ENCODE measurements at regions of chr11 and their contacts with region 1.

Region 1: DNA sequence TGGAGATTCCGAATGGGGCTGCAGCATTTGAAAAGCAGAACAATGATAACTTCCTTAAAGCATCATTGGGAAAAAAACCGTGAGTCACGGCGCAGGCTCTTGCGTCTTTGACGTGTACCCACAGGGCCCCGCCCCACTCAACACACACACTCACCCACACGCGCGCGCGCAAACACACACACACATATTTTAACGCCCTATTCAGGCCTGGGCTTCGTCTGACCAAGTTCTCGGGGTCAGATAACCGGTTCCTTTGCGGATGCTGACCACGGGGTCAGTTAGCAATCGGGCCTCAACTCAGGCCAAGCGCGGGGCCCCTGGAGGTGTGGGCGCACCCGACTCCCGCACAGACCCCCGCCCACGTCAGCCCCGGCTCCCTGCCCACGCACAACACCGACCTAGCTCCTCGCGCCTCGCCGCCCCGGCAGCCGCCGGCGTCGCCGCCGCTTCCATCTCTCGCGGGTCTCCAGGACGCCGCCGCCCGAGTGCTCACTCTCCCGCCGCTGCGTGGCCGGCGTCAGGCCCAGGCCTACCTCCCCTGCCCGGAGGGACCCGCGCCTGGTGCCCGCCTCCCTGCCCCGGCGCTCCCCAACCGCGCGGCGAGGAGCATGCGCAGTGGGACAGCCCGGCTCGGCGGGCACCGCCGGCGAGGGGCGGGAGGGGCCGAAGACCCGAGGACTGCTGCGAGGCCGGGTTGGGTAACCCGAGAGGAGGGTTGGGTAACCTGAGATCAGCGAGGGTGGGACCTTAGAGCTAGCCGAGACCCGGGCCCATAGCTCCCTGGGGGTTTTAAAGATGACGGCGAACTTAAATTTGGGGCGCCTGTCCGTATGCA is at the start of gene SLC36A4:
- DNase-seq: peak; percentile 94
- ATAC-seq: peak; percentile 85
- H3K4me3 ChIP-seq: peak within 1 kb of the TSS; percentile 67 to 99 (median 77)
- H3K4me3 Mint-ChIP-seq: peak within 1 kb of the TSS; percentile 96
- H3K27ac ChIP-seq: peak within 1 kb of the TSS; percentile 90 to 97
- H3K27ac Mint-ChIP-seq: peak within 1 kb of the TSS; percentile 96
- H3K4me1 ChIP-seq: peaks cover 7% of the 10 kb centered on the region in 2 donors
- H3K4me1 Mint-ChIP-seq: peaks cover 18% of the 10 kb centered on the region
- H3K27me3 ChIP-seq: peaks cover 0 to 7% (median 0%) of the 10 kb centered on the region in 4 experiments
- H3K27me3 Mint-ChIP-seq: peaks cover 10% of the 10 kb centered on the region
- CTCF ChIP-seq: no peak
- total RNA-seq, gene SLC36A4: 27.5 and 28.2 TPM in 2 replicates

Region 2: DNA sequence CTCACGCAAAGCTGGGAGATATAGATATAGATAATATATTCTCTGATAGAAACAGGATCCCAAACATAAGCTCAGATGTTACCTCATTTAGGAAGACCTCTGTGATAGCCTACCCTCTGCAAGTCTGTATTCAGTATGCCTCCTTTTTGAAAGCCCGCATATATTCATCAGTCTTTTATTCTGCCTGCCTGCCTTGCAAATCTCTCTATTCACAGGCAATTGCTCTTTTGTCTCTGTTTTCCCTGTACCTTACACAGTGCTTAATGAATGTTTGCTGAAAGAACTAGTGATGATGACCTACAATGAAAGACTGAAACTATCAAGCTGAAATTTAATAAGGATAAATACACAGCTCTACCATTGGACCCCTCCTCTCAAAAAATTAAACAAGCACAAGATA is 151.3 kb after region 1 on chr11:
- CTCF ChIA-PET with region 1: no interaction called
- POLR2A ChIA-PET with region 1: no interaction called
- intact Hi-C with region 1: no loop called
- DNase-seq: no peak
- ATAC-seq: no peak
- H3K4me3 ChIP-seq: no peak overlapping the region
- H3K4me3 Mint-ChIP-seq: no peak overlapping the region
- H3K27ac ChIP-seq: no peak overlapping the region
- H3K27ac Mint-ChIP-seq: no peak overlapping the region
- H3K4me1 ChIP-seq: no peaks in the 10 kb centered on the region
- H3K4me1 Mint-ChIP-seq: no peaks in the 10 kb centered on the region
- H3K27me3 ChIP-seq: no peaks in the 10 kb centered on the region
- H3K27me3 Mint-ChIP-seq: peaks cover 6% of the 10 kb centered on the region
- CTCF ChIP-seq: no peak

Region 3: GRCh38 chr11:94128746-94129511 is 931.3 kb after region 1 on chr11 and contains the start of gene PANX1:
- CTCF ChIA-PET with region 1: no interaction called
- POLR2A ChIA-PET with region 1: no interaction called
- intact Hi-C with region 1: loop called (anchors 5 kb)
- DNase-seq: peak; percentile 89
- ATAC-seq: peak; percentile 81
- H3K4me3 ChIP-seq: peak within 1 kb of the TSS; percentile 73 to 92 (median 89)
- H3K4me3 Mint-ChIP-seq: no peak within 1 kb of the TSS
- H3K27ac ChIP-seq: peak within 1 kb of the TSS; percentile 81 to 90
- H3K27ac Mint-ChIP-seq: peak within 1 kb of the TSS; percentile 91
- H3K4me1 ChIP-seq: peaks cover 25 to 46% of the 10 kb centered on the region in 2 donors
- H3K4me1 Mint-ChIP-seq: peaks cover 29% of the 10 kb centered on the region
- H3K27me3 ChIP-seq: no peaks in the 10 kb centered on the region
- H3K27me3 Mint-ChIP-seq: no peaks in the 10 kb centered on the region
- CTCF ChIP-seq: no peak
- total RNA-seq, gene PANX1: 10.3 and 10.7 TPM in 2 replicates

Measured in B cell (primary cell).